Activated CD4-positive, alpha-beta memory T cell treated with anti-CD3 and anti-CD28 coated beads for 36 hours (primary cell): ENCODE measurements at regions of chr13 and their contacts with region 1.

Region 1: DNA sequence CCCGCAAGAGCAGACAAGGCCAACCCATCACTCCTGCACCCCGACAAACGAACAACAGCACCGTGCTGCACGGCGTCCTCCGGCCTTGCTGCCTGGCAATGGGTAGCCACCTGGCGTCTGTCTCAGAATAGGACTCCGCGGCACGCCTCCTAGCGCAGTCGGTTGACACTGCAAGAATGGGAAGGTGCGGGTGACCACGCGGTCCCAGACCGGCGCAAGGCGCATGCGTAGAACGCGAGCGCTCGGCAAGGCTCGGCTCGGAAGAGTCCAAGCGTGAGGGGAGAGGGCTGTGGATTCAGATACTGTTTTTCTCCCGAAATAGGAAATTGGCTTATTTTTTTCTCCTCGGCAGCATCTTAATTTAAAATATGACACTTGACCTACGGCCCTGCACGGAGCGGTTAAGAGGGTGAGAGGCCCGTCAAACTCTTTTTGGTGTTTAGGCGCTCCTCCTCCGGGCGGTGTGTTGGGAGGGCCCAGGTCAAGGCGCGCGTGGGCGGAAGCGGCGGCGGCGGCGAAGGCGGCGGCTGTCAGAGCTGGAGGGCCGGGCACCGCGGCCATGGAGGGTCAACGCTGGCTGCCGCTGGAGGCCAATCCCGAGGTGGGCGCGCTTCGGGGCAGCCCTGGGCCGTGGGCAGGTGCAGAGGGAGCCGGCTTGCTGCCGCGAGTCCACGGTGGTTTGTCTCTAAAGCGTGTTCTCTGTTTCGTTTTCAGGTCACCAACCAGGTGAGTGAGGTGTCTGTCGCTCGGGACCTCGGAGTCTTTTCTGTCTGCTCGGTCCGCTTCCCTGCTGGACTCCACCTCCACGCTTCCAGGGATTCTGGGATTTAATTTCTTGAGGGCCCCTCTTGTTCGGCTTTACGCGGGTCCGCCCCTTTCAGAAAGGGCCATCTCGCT is at the start of gene UCHL3:
- DNase-seq: peak; percentile 98
- H3K4me3 Mint-ChIP-seq: peak within 1 kb of the TSS; percentile 97
- H3K27ac Mint-ChIP-seq: peak within 1 kb of the TSS; percentile 95
- H3K4me1 Mint-ChIP-seq: peaks cover 35% of the 10 kb centered on the region
- H3K27me3 Mint-ChIP-seq: no peaks in the 10 kb centered on the region
- total RNA-seq, gene UCHL3: 39.1 to 42.6 TPM

Region 2: GRCh38 chr13:73765651-73766384 is 1783.7 kb before region 1 on chr13:
- CTCF ChIA-PET with region 1: no interaction called
- POLR2A ChIA-PET with region 1: no interaction called
- intact Hi-C with region 1: loop called (anchors 10 kb)
- DNase-seq: peak; percentile 85
- H3K4me3 Mint-ChIP-seq: peak overlapping the region; percentile 69
- H3K27ac Mint-ChIP-seq: peak overlapping the region; percentile 92
- H3K4me1 Mint-ChIP-seq: peaks cover 66% of the 10 kb centered on the region
- H3K27me3 Mint-ChIP-seq: no peaks in the 10 kb centered on the region

Region 3: GRCh38 chr13:75365724-75366173 is 183.8 kb before region 1 on chr13:
- CTCF ChIA-PET with region 1: interaction called, 3 read pairs
- POLR2A ChIA-PET with region 1: no interaction called
- intact Hi-C with region 1: loop called (anchors 2 kb)
- DNase-seq: peak; percentile 36
- H3K4me3 Mint-ChIP-seq: peak overlapping the region; percentile 34
- H3K27ac Mint-ChIP-seq: peak overlapping the region; percentile 76
- H3K4me1 Mint-ChIP-seq: peaks cover 36% of the 10 kb centered on the region
- H3K27me3 Mint-ChIP-seq: peaks cover 3% of the 10 kb centered on the region

Region 4: GRCh38 chr13:75482070-75482819 is 67.3 kb before region 1 on chr13 and contains the start of gene TBC1D4:
- CTCF ChIA-PET with region 1: interaction called, 8 read pairs
- POLR2A ChIA-PET with region 1: no interaction called
- intact Hi-C with region 1: loop called (anchors 1 kb)
- DNase-seq: peak; percentile 71
- H3K4me3 Mint-ChIP-seq: peak within 1 kb of the TSS; percentile 93
- H3K27ac Mint-ChIP-seq: no peak within 1 kb of the TSS
- H3K4me1 Mint-ChIP-seq: peaks cover 13% of the 10 kb centered on the region
- H3K27me3 Mint-ChIP-seq: peaks cover 62% of the 10 kb centered on the region
- total RNA-seq, gene TBC1D4: 13.0 to 14.8 TPM

Region 5: DNA sequence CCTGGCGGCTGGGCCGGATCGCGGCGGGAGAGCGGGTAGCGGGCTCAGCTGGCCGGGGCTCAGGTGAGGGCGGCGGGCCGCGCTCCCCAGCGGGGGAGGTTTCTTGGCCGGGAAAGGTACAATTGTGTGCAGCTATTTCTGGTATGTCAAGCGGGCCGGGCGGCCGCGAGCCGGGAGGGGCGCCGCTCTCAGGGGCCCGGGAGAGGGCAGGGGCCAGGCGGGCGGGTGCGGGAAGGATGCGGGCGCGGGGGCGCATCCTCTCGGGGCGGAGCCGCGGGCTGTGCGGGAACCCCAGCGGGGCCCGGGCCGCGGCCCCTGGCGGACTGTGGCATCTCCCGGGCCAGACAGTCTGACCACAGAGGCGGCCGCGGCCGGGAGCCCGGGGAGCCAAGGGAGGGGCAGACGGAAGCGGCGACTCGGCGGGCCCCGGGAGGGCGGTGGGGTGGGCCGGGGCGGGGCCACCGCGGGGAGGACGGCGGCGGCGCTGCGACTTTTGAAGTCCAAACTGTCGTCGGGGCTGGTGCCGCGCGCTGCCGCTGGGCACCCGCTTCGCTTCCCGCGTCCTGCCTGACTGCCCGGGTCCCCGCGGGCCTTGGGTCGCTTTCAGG is 86.4 kb after region 1 on chr13 and contains the start of gene LMO7:
- CTCF ChIA-PET with region 1: no interaction called
- POLR2A ChIA-PET with region 1: no interaction called
- intact Hi-C with region 1: loop called (anchors 1 kb)
- DNase-seq: peak; percentile 59
- H3K4me3 Mint-ChIP-seq: peak within 1 kb of the TSS; percentile 74
- H3K27ac Mint-ChIP-seq: no peak within 1 kb of the TSS
- H3K4me1 Mint-ChIP-seq: peaks cover 10% of the 10 kb centered on the region
- H3K27me3 Mint-ChIP-seq: peaks cover 10% of the 10 kb centered on the region
- total RNA-seq, gene LMO7: 7.8 to 8.7 TPM